ENCODE measurements at regions of chr1 and their contacts with region 1.

Region 1: GRCh38 chr1:59814180-59814900 is 409 bp upstream of the HOOK1 start:
- DNase-seq: peak; percentile 73 to 97 (median 88)
- ATAC-seq: peak; percentile 94
- H3K4me3 ChIP-seq: peak overlapping the region; percentile 64 to 72
- H3K4me3 Mint-ChIP-seq: no peak overlapping the region
- H3K27ac ChIP-seq: peak overlapping the region; percentile 43 to 59
- H3K27ac Mint-ChIP-seq: peak overlapping the region; percentile 89
- H3K4me1 ChIP-seq: peaks cover 15% of the 10 kb centered on the region
- H3K4me1 Mint-ChIP-seq: peaks cover 4% of the 10 kb centered on the region
- H3K27me3 ChIP-seq: peaks cover 0 to 4% of the 10 kb centered on the region in 2 experiments
- H3K27me3 Mint-ChIP-seq: peaks cover 7% of the 10 kb centered on the region
- CTCF ChIP-seq: no peak

Region 2: DNA sequence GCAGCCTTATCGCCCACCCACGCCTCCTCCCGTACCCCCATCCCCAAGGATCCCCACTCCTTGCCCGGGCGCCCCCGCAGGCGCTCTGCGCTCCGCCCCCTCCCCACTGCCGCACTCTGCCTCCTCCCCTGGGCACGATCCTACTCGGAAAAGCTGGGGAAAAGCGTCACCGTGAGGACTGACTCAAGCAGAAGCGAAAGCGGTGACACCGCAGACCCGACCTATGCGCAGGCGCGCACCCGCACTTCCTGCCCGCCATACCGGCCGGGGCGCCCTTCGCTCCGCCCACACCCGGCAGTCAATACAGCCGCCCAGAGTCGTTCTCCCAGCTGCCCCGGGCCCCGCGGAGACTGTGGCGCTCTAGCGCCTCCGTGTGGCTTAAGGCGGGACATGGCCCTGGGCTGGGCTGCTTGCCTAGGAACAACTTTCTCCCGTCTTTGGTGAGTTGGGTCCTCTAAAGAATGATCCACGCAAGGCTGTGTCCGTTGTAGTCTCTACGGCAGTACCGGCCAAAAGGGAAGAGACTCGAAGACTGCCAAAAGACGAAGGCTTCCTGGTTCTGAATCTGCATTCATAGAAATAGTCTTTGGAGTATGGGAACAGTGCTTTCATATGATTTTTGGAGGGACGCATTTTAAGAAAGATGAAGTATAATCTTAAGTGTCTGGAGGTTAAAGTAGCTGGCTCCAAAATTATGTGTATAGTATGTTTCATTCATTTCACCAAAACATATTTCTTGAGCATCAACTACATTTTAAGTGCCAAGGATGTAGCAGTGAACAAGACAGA is 1267.6 kb before region 1 on chr1 and contains the start of gene OMA1:
- CTCF ChIA-PET with region 1: no interaction called
- POLR2A ChIA-PET with region 1: no interaction called
- intact Hi-C with region 1: loop called (anchors 1 kb)
- DNase-seq: peak; percentile 95 to 99 (median 98)
- ATAC-seq: peak; percentile 92
- H3K4me3 ChIP-seq: peak within 1 kb of the TSS; percentile 63 to 77
- H3K4me3 Mint-ChIP-seq: peak within 1 kb of the TSS; percentile 97
- H3K27ac ChIP-seq: peak within 1 kb of the TSS; percentile 95 to 97
- H3K27ac Mint-ChIP-seq: peak within 1 kb of the TSS; percentile 99
- H3K4me1 ChIP-seq: peaks cover 12% of the 10 kb centered on the region
- H3K4me1 Mint-ChIP-seq: peaks cover 32% of the 10 kb centered on the region
- H3K27me3 ChIP-seq: no peaks in the 10 kb centered on the region
- H3K27me3 Mint-ChIP-seq: no peaks in the 10 kb centered on the region
- CTCF ChIP-seq: peak; percentile 97
- total RNA-seq, gene OMA1: 25.1 to 31.2 TPM

Region 3: DNA sequence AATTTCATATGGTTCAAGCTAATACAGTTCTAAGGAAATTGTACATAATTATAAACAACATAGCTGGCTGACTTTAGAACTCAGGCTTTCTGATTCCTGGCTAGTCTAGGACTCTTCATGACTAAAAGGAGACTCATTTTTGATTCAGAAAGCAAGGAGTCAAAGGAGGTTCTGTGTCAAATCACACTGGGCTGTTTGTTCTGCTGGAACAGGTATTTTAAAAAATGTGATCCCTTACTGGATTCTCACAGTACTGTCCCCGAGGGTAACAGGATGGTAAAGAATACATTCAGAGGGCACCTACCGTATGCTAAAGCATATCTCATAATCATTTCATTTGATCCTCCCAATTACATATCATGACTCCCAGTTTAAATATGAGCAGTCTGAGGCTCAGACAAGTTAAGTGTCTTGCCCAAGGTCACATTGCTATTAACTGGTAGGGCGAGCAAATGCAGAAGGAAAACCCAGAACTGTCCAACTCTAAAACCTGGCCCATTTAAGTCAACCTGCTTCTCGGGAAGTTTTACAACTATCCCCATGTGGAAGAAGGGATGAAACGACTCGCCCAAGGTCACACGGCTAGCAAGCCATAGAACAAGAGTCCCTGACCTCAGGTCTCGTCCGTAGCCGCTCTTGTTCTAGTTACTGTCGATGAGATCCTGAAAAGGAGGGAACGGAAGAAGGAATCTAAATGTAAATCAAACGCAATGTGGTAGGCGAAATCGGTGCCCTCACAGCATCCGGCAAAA is 1115.2 kb before region 1 on chr1:
- CTCF ChIA-PET with region 1: no interaction called
- POLR2A ChIA-PET with region 1: no interaction called
- intact Hi-C with region 1: loop called (anchors 1 to 10 kb)
- DNase-seq: peak in 1 of 9 experiments; percentile 51
- ATAC-seq: no peak
- H3K4me3 ChIP-seq: peak overlapping the region; percentile 86 to 100
- H3K4me3 Mint-ChIP-seq: peak overlapping the region; percentile 99
- H3K27ac ChIP-seq: peak overlapping the region; percentile 84 to 93
- H3K27ac Mint-ChIP-seq: peak overlapping the region; percentile 98
- H3K4me1 ChIP-seq: peaks cover 28% of the 10 kb centered on the region
- H3K4me1 Mint-ChIP-seq: peaks cover 25% of the 10 kb centered on the region
- H3K27me3 ChIP-seq: no peaks in the 10 kb centered on the region
- H3K27me3 Mint-ChIP-seq: no peaks in the 10 kb centered on the region
- CTCF ChIP-seq: no peak

Region 4: DNA sequence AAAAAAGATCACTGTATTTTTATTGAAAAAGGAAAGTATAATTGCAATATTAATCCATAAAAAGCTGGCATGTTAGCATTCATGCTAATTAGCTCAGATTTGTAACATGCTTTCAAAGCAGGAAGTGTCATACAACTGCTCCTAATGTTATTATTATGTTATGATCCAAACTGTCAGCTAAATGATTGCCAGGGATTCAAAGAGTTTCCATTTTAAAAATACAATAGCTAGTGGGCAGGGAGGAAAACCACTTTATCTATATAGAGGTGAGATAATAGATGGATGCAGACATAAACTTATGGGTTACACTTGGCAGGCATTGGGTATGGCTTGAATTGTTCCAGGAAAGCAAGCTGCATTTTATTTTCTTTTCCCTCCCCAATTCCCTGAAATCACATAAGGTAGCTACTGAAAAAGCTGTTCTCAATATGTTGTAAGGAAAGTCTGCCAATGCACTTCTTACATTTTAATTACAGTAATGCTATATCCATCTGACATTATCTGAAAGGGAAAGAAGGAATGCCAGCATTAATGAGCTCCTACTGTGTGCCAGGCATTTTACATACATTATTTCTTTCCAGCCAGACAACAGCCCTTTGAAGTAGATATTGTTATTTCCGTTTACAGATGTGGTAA is 1104.7 kb before region 1 on chr1:
- CTCF ChIA-PET with region 1: no interaction called
- POLR2A ChIA-PET with region 1: no interaction called
- intact Hi-C with region 1: loop called in 1 of 2 experiments (anchors 10 kb)
- DNase-seq: no peak
- ATAC-seq: no peak
- H3K4me3 ChIP-seq: no peak overlapping the region
- H3K4me3 Mint-ChIP-seq: no peak overlapping the region
- H3K27ac ChIP-seq: no peak overlapping the region
- H3K27ac Mint-ChIP-seq: no peak overlapping the region
- H3K4me1 ChIP-seq: no peaks in the 10 kb centered on the region
- H3K4me1 Mint-ChIP-seq: no peaks in the 10 kb centered on the region
- H3K27me3 ChIP-seq: no peaks in the 10 kb centered on the region
- H3K27me3 Mint-ChIP-seq: no peaks in the 10 kb centered on the region
- CTCF ChIP-seq: no peak

Region 5: DNA sequence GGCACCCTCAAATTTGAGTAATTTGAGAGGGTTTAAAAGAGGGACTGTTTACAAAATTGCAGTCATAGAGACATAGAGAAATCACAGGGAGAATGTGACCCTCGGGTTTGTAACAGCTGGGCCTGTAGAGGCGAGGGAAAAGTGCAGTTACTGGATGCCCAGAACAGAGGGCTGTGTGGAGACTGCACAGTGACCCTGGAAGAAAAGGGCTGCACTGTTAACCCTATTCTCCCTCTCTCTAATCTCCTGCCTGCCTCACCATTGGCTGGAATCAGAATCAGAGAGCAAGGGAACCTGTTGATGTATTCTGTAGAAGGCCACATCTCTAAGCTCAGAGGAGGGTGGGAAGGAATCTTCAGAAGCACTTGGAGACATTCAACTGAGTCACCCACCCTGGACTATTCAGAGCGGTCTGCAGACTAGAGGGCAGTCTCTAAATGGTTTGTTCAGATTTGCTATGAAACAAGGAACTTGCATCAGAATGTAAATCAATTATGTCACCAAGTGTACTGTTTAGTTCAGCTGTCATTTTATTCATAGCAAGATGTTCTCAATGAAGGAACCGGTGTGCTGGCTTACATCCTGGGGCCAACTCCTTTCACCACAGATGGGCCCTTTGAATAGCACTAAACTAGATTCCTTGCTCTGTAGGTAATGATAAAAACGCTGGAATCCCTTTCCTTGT is 131.8 kb before region 1 on chr1:
- CTCF ChIA-PET with region 1: no interaction called
- POLR2A ChIA-PET with region 1: no interaction called
- intact Hi-C with region 1: no loop called
- DNase-seq: no peak
- ATAC-seq: no peak
- H3K4me3 ChIP-seq: no peak overlapping the region
- H3K4me3 Mint-ChIP-seq: no peak overlapping the region
- H3K27ac ChIP-seq: no peak overlapping the region
- H3K27ac Mint-ChIP-seq: no peak overlapping the region
- H3K4me1 ChIP-seq: no peaks in the 10 kb centered on the region
- H3K4me1 Mint-ChIP-seq: no peaks in the 10 kb centered on the region
- H3K27me3 ChIP-seq: no peaks in the 10 kb centered on the region
- H3K27me3 Mint-ChIP-seq: no peaks in the 10 kb centered on the region
- CTCF ChIP-seq: no peak

Region 6: DNA sequence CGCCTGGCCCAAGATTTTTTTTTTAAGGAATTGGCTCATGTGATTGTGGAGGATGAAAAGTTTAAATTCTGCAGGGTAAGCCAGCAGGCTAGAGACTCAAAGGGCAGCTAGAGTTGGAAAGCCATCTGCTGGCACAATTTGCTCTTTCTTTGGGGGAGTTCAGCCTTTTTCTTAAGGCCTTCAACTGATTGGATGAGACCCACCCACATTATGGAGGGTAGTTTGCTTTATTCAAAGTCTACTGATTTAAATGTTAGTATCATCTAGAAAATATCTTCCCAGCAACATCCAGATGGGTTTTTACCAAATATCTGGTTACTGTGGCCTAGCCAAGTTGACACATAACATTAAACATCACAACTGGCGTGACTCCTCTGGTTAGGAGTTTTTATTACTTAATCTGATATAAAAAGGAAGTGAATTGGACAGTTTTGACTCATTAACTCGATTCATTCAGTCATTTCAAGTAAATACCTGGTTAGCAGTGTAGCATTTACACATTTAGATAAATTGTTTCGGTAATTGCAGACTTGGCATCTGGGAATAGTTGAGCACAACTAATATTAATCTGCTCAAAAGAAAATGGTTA is 12.8 kb after region 1 on chr1:
- CTCF ChIA-PET with region 1: no interaction called
- POLR2A ChIA-PET with region 1: no interaction called
- intact Hi-C with region 1: no loop called
- DNase-seq: no peak
- ATAC-seq: no peak
- H3K4me3 ChIP-seq: no peak overlapping the region
- H3K4me3 Mint-ChIP-seq: no peak overlapping the region
- H3K27ac ChIP-seq: no peak overlapping the region
- H3K27ac Mint-ChIP-seq: no peak overlapping the region
- H3K4me1 ChIP-seq: no peaks in the 10 kb centered on the region
- H3K4me1 Mint-ChIP-seq: no peaks in the 10 kb centered on the region
- H3K27me3 ChIP-seq: no peaks in the 10 kb centered on the region
- H3K27me3 Mint-ChIP-seq: no peaks in the 10 kb centered on the region
- CTCF ChIP-seq: no peak

Region 7: GRCh38 chr1:59926381-59927123 is 112.2 kb after region 1 on chr1 and contains the start of gene CYP2J2:
- CTCF ChIA-PET with region 1: no interaction called
- POLR2A ChIA-PET with region 1: no interaction called
- intact Hi-C with region 1: loop called in 1 of 2 experiments (anchors 10 kb)
- DNase-seq: peak; percentile 10 to 60 (median 32)
- ATAC-seq: peak; percentile 71
- H3K4me3 ChIP-seq: peak within 1 kb of the TSS; percentile 60 to 71
- H3K4me3 Mint-ChIP-seq: peak within 1 kb of the TSS; percentile 92
- H3K27ac ChIP-seq: peak within 1 kb of the TSS in 1 of 2 experiments; percentile 30
- H3K27ac Mint-ChIP-seq: peak within 1 kb of the TSS; percentile 47
- H3K4me1 ChIP-seq: peaks cover 6% of the 10 kb centered on the region
- H3K4me1 Mint-ChIP-seq: peaks cover 15% of the 10 kb centered on the region
- H3K27me3 ChIP-seq: peaks cover 0 to 3% of the 10 kb centered on the region in 2 experiments
- H3K27me3 Mint-ChIP-seq: peaks cover 19% of the 10 kb centered on the region
- CTCF ChIP-seq: no peak
- total RNA-seq, gene CYP2J2: 0.62 to 0.78 TPM

Measured in CD8-positive, alpha-beta T cell (primary cell).